Dendritic cell treated with granulocyte-macrophage colony-stimulating factor and Interleukin-4, amounts not matched to agents 40 ng/mL and 50 ng/mL, for 4 days (primary cell): ENCODE measurements at regions of chr2 and their contacts with region 1.

Region 1: DNA sequence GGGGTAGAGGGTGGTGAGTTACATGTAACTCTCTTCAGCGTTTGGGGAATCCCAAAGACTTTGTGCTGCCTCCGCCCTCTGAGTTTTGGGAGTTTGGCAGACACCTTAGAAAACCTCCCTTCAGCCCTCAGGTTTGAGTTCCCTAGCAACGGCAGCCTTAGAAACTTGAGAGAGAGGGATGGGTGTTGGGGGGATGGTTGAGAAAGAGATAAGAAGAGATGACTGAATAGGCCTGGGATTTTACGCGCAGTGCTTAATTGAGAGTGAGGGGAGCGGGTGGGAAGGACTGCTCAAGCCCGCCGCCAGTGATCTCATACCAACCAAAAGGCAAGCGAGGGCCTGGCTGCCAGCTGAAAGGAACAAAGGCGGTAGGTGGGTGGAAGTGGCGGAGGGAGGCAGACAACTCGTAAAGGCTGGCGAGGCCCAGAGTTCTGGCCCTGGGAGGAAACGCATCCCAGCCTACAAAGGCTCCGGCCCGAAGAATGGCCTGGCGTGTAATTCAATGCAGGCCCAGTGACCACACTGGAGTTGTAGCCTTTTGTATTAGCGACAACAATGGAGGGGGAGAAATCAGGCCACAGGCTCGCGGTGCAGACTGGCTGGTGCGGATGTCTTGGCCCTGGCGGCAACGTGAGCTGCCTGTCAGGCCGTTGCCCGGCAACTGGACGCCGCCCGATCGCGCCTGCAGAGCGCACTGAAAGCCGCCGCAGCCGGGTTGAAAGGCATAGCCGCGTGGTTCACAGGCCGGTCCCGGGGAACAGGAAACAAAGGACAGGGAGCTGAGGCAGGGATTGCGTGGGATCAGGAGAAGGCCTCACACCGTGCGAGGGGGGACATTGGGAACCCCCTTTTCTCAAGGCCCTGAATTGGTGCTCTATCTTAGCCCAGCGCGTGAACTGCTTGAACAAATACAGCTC is 39.9 kb upstream of the DARS1 start:
- H3K4me3 Mint-ChIP-seq: peak overlapping the region; percentile 13
- H3K27ac Mint-ChIP-seq: peak overlapping the region; percentile 39
- H3K4me1 Mint-ChIP-seq: peaks cover 40% of the 10 kb centered on the region
- H3K27me3 Mint-ChIP-seq: peaks cover 3% of the 10 kb centered on the region

Region 2: DNA sequence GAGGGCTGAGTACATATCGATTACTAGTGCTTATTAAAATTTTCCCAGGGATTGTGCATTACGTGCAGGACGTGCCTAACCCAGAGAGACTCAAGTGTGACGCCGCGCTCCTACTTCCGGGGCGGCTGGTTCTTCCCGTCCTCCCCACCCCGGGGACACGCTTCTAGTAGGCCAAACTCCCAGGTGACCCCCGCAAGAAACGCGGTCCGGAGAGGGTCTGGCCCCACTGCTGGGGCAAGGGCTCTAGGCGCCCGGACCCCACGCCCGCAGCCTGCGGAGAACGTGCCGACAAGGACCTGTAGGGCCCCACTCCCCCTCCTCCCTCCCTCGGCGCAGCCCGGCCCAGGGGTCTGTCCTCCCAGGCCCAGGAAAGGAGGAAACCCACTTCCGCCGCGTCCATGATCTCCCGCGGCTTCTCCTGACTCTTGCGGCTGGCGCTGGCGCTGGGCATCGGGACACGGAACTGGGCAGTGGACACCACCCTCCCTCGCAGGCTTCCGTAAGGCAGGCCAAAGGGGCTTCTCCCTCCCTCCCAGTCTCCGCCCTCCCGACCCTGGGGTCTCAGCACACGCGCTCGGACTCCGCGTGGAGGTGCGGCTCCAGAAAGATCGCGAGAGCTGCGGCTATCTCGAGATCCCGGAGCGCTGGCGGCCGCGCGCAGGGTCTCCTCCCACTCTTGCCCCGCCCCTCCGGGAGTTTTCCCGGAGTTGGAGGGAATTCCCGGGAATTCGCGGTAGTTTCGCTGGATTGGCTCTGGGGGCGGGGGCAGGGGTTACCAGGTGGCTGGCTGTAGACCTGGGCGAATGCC is 40.1 kb before region 1 on chr2 and contains the start of gene DARS1:
- intact Hi-C with region 1: loop called (anchors 5 kb)
- H3K4me3 Mint-ChIP-seq: peak within 1 kb of the TSS; percentile 87
- H3K27ac Mint-ChIP-seq: peak within 1 kb of the TSS; percentile 99
- H3K4me1 Mint-ChIP-seq: peaks cover 27% of the 10 kb centered on the region
- H3K27me3 Mint-ChIP-seq: no peaks in the 10 kb centered on the region

Region 3: DNA sequence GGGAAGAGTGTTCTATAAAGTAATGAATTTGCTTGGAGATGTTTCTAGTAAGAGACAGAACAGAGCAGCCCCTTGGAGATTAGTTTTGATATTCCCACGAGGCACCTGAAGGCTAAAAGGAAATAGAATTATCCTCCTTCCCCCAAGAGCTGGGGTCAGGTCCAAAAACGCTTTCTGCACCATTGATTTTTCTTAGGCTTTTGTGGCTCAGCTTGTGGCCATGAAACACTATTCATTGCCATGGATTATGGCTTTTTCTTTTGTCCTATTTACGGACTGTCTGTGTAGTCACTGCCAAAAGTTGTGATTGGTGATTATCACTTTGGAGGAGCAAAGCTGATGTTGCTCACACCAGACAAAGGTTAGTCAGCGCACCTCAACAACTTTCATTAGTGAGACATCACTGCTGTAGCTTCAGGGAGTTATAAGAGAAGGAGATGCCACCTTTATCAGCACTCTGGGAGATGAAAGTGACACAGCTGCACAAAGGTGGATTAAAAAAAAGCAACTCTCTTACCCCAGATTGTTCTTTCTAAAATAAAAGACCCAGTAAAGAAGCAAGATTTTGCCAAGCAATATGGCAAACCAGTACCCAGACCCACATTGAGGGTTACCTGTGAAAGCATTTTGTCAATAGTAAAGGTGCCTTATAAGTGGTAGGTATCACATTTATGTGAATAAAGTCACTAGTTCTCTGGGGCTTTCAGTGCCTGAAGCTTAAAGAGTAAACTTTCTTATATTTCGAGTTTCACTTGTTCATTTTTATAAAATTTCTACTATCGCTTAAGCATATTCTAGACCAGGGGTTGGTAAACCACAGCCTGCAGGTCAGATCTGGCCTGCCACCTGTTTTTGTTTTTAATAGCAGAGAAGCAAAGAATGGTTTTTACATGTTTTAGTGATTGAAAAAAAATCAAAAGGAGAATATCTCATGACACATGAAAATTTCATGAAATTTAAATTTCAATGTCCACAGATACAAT is 82.0 kb after region 1 on chr2:
- intact Hi-C with region 1: loop called (anchors 5 kb)
- H3K4me3 Mint-ChIP-seq: no peak overlapping the region
- H3K27ac Mint-ChIP-seq: no peak overlapping the region
- H3K4me1 Mint-ChIP-seq: peaks cover 28% of the 10 kb centered on the region
- H3K27me3 Mint-ChIP-seq: no peaks in the 10 kb centered on the region